Activated CD4-positive, alpha-beta T cell treated with anti-CD3 and anti-CD28 coated beads, Interleukin-2, amount 10 ng/mL, durations not matched to agents 24 days and 14 days (primary cell): ENCODE measurements at regions of chr3 and their contacts with region 1.

Region 1: DNA sequence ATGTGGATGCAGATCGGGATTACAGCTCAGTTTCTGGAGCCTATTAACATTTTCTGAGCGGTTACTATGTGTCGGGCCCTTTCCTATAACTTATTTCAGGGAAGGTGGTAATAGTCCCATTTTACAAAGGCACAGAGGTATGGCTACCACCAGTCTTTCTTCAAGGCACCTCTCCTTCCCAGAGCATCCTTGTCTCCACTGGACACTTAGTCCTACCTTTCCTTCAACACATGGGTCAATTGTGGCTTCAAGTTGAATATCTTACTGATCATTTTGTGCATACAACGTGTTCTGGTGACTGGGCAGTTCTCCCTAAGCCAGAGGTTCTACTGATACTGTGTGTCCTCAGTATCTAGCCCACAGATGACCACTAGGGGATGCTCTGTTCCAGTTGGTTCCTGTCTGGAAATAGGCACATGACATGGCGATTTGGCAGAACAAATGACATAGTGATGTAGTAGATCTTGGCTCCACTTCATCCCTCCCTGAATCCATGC is 60.7 kb upstream of the CMTM8 start:
- DNase-seq: peak; percentile 86
- H3K4me3 Mint-ChIP-seq: peak overlapping the region; percentile 7
- H3K27ac Mint-ChIP-seq: no peak overlapping the region
- H3K4me1 Mint-ChIP-seq: peaks cover 12% of the 10 kb centered on the region
- H3K27me3 Mint-ChIP-seq: peaks cover 7% of the 10 kb centered on the region

Region 2: GRCh38 chr3:31999907-32000439 is 177.8 kb before region 1 on chr3:
- intact Hi-C with region 1: no loop called
- DNase-seq: no peak
- H3K4me3 Mint-ChIP-seq: no peak overlapping the region
- H3K27ac Mint-ChIP-seq: no peak overlapping the region
- H3K4me1 Mint-ChIP-seq: peaks cover 10% of the 10 kb centered on the region
- H3K27me3 Mint-ChIP-seq: peaks cover 8% of the 10 kb centered on the region

Region 3: GRCh38 chr3:32154205-32154579 is 23.6 kb before region 1 on chr3:
- intact Hi-C with region 1: no loop called
- DNase-seq: no peak
- H3K4me3 Mint-ChIP-seq: no peak overlapping the region
- H3K27ac Mint-ChIP-seq: no peak overlapping the region
- H3K4me1 Mint-ChIP-seq: no peaks in the 10 kb centered on the region
- H3K27me3 Mint-ChIP-seq: no peaks in the 10 kb centered on the region

Region 4: DNA sequence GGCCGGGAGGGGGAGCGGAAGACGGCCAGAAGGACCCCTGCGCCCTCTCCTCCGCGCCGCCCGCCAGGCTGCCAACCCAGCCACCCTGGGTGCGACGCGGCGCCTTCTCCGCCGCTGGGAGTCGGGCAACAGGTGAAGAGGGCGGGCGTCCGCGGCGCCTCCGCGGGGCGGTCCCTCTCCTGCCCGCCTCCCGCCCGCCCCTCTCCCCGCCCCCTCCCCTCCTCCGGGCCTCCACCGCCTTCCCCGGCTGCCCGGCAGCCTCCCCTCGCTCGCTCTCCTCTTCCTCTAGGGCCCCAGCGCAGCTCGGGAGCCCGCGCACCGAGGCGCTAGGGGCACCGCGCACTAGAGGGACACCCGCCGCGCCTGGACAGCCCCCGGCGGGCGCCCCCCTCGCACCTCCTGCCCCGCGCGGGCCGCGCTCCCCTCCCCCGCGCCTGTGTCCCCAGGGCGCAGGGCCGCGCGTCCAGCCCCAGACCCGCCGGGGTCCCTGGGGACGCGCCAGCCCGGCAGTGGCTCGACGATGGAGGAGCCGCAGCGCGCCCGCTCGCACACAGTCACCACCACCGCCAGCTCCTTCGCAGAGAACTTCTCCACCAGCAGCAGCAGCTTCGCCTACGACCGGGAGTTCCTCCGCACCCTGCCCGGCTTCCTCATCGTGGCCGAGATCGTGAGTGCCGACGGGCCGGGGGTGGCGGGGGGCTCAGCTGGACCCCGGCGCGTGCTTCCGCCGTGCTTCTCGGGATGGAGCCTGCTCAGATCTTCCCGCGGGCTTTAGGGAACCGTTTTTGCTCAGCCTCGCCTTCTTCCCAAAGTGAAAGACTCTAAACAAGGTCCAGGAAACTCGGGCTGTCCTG is 60.9 kb after region 1 on chr3 and contains the start of gene CMTM8:
- intact Hi-C with region 1: loop called (anchors 5 kb)
- DNase-seq: peak; percentile 90
- H3K4me3 Mint-ChIP-seq: peak within 1 kb of the TSS; percentile 86
- H3K27ac Mint-ChIP-seq: peak within 1 kb of the TSS; percentile 75
- H3K4me1 Mint-ChIP-seq: peaks cover 19% of the 10 kb centered on the region
- H3K27me3 Mint-ChIP-seq: peaks cover 32% of the 10 kb centered on the region
- total RNA-seq, gene CMTM8: 4.8 and 5.5 TPM in 2 replicates

Region 5: GRCh38 chr3:32334675-32335074 is 156.9 kb after region 1 on chr3:
- intact Hi-C with region 1: loop called (anchors 1 kb)
- DNase-seq: peak; percentile 89
- H3K4me3 Mint-ChIP-seq: peak overlapping the region; percentile 57
- H3K27ac Mint-ChIP-seq: peak overlapping the region; percentile 31
- H3K4me1 Mint-ChIP-seq: peaks cover 42% of the 10 kb centered on the region
- H3K27me3 Mint-ChIP-seq: no peaks in the 10 kb centered on the region

Region 6: DNA sequence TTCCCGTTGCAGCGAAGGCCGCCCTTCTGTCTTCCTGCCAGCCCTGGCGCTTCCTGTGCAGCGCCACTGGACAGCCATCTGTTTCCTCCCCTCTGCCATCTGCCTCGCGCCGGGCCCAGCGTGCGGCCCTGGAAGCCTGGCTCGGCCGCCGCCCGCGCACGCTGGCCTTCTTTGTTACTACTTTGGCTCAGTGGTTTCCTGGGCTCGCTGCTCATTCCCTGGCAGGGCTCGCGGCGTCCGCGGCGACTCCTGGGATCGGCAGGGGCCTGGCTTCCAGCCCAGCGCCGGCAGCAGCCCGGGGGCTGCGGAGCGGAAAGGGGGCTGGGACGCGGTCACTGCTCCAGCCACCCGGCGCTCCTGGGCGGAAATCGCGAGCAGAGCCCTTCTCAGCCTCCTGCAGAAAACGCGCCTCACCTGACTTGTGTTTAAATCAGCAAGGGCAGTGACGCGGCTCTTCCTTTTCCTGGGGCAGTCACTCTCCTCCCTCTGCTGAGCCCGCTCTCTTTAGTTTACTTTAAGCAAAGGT is 223.9 kb after region 1 on chr3:
- intact Hi-C with region 1: loop called (anchors 1 kb)
- DNase-seq: peak; percentile 90
- H3K4me3 Mint-ChIP-seq: peak overlapping the region; percentile 92
- H3K27ac Mint-ChIP-seq: peak overlapping the region; percentile 99
- H3K4me1 Mint-ChIP-seq: peaks cover 59% of the 10 kb centered on the region
- H3K27me3 Mint-ChIP-seq: no peaks in the 10 kb centered on the region

Region 7: DNA sequence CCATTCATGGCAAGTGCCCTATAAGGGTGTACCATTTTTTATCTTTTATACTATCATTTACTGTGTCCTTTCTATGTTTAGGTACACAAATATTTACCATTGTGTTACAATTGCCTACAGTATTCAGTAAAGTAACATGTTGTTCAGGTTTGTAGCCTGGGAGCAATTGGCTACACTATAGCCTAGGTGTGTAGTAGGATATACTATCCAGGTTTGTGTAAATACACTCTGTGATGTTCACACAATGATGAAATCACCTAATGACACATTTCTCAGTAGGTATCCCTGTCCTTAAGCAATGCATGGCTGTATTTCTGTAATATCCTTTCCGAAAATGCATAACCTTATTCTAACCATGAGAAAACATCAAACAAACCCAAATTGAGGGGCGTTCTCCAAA is 489.4 kb after region 1 on chr3:
- intact Hi-C with region 1: loop called (anchors 2 kb)
- DNase-seq: no peak
- H3K4me3 Mint-ChIP-seq: no peak overlapping the region
- H3K27ac Mint-ChIP-seq: no peak overlapping the region
- H3K4me1 Mint-ChIP-seq: no peaks in the 10 kb centered on the region
- H3K27me3 Mint-ChIP-seq: peaks cover 14% of the 10 kb centered on the region